A673 (cell line): ENCODE measurements at regions of chr17 and their contacts with region 1.

Region 1: GRCh38 chr17:63819585-63820537 is 7.4 kb upstream of the PSMC5 start:
- DNase-seq: no peak
- H3K4me3 ChIP-seq: no peak overlapping the region
- H3K27ac ChIP-seq: no peak overlapping the region
- H3K4me1 ChIP-seq: no peaks in the 10 kb centered on the region
- H3K27me3 ChIP-seq: no peaks in the 10 kb centered on the region
- CTCF ChIP-seq: no peak

Region 2: GRCh38 chr17:63741221-63742049 is 78.4 kb before region 1 on chr17 and contains the start of gene STRADA:
- CTCF ChIA-PET with region 1: no interaction called
- POLR2A ChIA-PET with region 1: no interaction called
- intact Hi-C with region 1: no loop called
- DNase-seq: peak; percentile 99
- H3K4me3 ChIP-seq: peak within 1 kb of the TSS; percentile 91
- H3K27ac ChIP-seq: peak within 1 kb of the TSS; percentile 93
- H3K4me1 ChIP-seq: peaks cover 4% of the 10 kb centered on the region
- H3K27me3 ChIP-seq: no peaks in the 10 kb centered on the region
- CTCF ChIP-seq: no peak
- total RNA-seq, gene STRADA: 56.3 and 62.8 TPM in 2 replicates

Region 3: DNA sequence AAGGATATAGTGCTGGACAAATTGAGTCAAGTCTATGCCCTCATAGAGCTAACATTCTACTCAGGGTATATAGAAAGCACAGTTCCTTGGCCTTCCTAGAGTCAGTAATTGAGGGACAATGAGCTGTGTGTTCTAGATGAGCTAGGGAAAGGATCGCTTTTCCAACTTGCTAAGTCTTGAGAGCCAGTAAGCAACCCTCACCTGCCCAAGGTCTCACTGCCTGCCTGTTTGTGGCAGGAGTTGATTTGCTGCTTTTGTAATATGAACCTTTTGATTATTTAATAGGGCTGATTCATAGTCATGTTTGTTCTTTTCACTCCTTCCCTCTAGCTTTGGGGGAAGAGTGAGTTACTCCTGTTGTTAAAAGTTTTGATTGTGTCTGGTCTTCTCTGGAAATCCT is 39.3 kb before region 1 on chr17:
- CTCF ChIA-PET with region 1: no interaction called
- POLR2A ChIA-PET with region 1: no interaction called
- intact Hi-C with region 1: loop called (anchors 5 kb)
- DNase-seq: no peak
- H3K4me3 ChIP-seq: no peak overlapping the region
- H3K27ac ChIP-seq: peak overlapping the region; percentile 14
- H3K4me1 ChIP-seq: peaks cover 8% of the 10 kb centered on the region
- H3K27me3 ChIP-seq: no peaks in the 10 kb centered on the region
- CTCF ChIP-seq: no peak

Region 4: GRCh38 chr17:64005734-64006167 is 185.9 kb after region 1 on chr17:
- CTCF ChIA-PET with region 1: no interaction called
- POLR2A ChIA-PET with region 1: no interaction called
- intact Hi-C with region 1: no loop called
- DNase-seq: no peak
- H3K4me3 ChIP-seq: no peak overlapping the region
- H3K27ac ChIP-seq: no peak overlapping the region
- H3K4me1 ChIP-seq: no peaks in the 10 kb centered on the region
- H3K27me3 ChIP-seq: peaks cover 3% of the 10 kb centered on the region
- CTCF ChIP-seq: no peak